CD4-positive, alpha-beta T cell (primary cell): ENCODE measurements at regions of chr1 and their contacts with region 1.

Region 1: GRCh38 chr1:221741711-221742554 is at the start of gene DUSP10:
- DNase-seq: peak; percentile 97 to 100 (median 98)
- ATAC-seq: peak; percentile 85
- H3K4me3 ChIP-seq: peak within 1 kb of the TSS; percentile 75
- H3K4me3 Mint-ChIP-seq: peak within 1 kb of the TSS; percentile 75
- H3K27ac ChIP-seq: peak within 1 kb of the TSS; percentile 98 to 99
- H3K27ac Mint-ChIP-seq: no peak within 1 kb of the TSS
- H3K4me1 ChIP-seq: peaks cover 41% of the 10 kb centered on the region
- H3K4me1 Mint-ChIP-seq: peaks cover 26% of the 10 kb centered on the region
- H3K27me3 ChIP-seq: no peaks in the 10 kb centered on the region
- H3K27me3 Mint-ChIP-seq: no peaks in the 10 kb centered on the region
- CTCF ChIP-seq: no peak
- total RNA-seq, gene DUSP10: 66.9 to 70.9 TPM

Region 2: GRCh38 chr1:221478050-221478949 is 263.6 kb before region 1 on chr1:
- CTCF ChIA-PET with region 1: interaction called, 12 read pairs
- POLR2A ChIA-PET with region 1: interaction called, 13 read pairs
- intact Hi-C with region 1: loop called in 1 of 2 experiments (anchors 5 kb)
- DNase-seq: peak; percentile 16 to 71 (median 50)
- ATAC-seq: peak; percentile 79
- H3K4me3 ChIP-seq: no peak overlapping the region
- H3K4me3 Mint-ChIP-seq: no peak overlapping the region
- H3K27ac ChIP-seq: no peak overlapping the region
- H3K27ac Mint-ChIP-seq: no peak overlapping the region
- H3K4me1 ChIP-seq: peaks cover 4% of the 10 kb centered on the region
- H3K4me1 Mint-ChIP-seq: no peaks in the 10 kb centered on the region
- H3K27me3 ChIP-seq: no peaks in the 10 kb centered on the region
- H3K27me3 Mint-ChIP-seq: peaks cover 5% of the 10 kb centered on the region
- CTCF ChIP-seq: peak; percentile 76

Region 3: DNA sequence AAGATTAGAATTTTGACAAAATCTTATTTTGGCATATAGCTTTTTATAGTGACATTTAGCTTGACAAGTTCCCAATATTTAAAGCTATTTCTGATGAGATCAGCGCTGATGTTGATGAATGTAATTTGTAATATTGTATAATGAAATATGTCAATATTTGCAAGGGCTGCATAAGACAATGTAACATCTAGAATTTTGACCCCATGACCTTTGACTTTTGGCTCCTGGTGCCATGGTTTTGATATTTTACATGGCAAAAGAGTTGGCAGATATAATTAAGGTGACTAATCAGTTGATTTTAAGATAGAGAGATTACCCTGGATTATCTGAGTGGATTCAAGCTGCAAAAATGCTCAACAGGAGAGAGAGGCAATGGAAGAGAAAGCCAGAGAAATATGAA is 63.9 kb before region 1 on chr1:
- CTCF ChIA-PET with region 1: no interaction called
- POLR2A ChIA-PET with region 1: interaction called, 10 read pairs
- intact Hi-C with region 1: no loop called
- DNase-seq: no peak
- ATAC-seq: no peak
- H3K4me3 ChIP-seq: no peak overlapping the region
- H3K4me3 Mint-ChIP-seq: no peak overlapping the region
- H3K27ac ChIP-seq: no peak overlapping the region
- H3K27ac Mint-ChIP-seq: no peak overlapping the region
- H3K4me1 ChIP-seq: no peaks in the 10 kb centered on the region
- H3K4me1 Mint-ChIP-seq: peaks cover 5% of the 10 kb centered on the region
- H3K27me3 ChIP-seq: no peaks in the 10 kb centered on the region
- H3K27me3 Mint-ChIP-seq: no peaks in the 10 kb centered on the region
- CTCF ChIP-seq: no peak

Region 4: GRCh38 chr1:221715321-221716169 is 26.4 kb before region 1 on chr1:
- CTCF ChIA-PET with region 1: interaction called, 22 read pairs
- POLR2A ChIA-PET with region 1: interaction called, 172 read pairs
- intact Hi-C with region 1: loop called (anchors 1 to 2 kb)
- DNase-seq: peak in 1 of 14 experiments; percentile 29
- ATAC-seq: no peak
- H3K4me3 ChIP-seq: no peak overlapping the region
- H3K4me3 Mint-ChIP-seq: no peak overlapping the region
- H3K27ac ChIP-seq: no peak overlapping the region
- H3K27ac Mint-ChIP-seq: peak overlapping the region; percentile 45
- H3K4me1 ChIP-seq: peaks cover 24% of the 10 kb centered on the region
- H3K4me1 Mint-ChIP-seq: peaks cover 55% of the 10 kb centered on the region
- H3K27me3 ChIP-seq: no peaks in the 10 kb centered on the region
- H3K27me3 Mint-ChIP-seq: no peaks in the 10 kb centered on the region
- CTCF ChIP-seq: no peak

Region 5: DNA sequence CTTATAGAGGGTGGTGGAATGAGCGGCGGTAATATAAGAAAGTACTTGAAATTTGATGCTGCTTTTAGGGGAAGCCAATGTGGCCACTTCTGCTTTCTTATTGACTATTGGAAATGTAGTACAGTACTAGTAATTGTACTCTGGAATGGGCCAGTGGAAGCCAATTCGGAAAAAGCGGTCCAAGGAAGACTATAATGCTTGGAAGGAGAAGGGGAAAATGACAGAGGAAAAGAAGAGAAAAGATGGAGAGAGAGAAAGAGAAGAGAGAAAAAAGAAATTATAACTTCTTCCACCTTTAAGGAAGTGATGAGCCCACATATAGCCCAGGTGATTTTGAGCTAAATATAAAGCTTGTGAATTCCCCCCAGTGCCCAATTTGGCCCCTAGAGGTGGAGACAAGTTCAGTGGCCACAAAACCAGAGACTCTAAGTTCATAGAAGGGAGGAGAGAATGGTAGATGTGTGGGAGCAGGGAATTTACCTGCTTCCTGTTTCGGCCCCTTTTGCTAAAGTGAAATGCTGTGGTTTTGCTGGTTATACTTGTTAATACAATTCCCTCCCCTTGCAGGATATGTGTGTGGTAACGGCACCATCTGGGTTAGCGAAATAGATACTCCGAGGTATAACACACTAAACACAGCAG is 35.6 kb after region 1 on chr1:
- CTCF ChIA-PET with region 1: no interaction called
- POLR2A ChIA-PET with region 1: interaction called, 72 read pairs
- intact Hi-C with region 1: loop called in 1 of 2 experiments (anchors 1 kb)
- DNase-seq: peak in 6 of 14 experiments; percentile 16 to 89 (median 52)
- ATAC-seq: peak; percentile 76
- H3K4me3 ChIP-seq: no peak overlapping the region
- H3K4me3 Mint-ChIP-seq: peak overlapping the region; percentile 47
- H3K27ac ChIP-seq: peak overlapping the region; percentile 43 to 59
- H3K27ac Mint-ChIP-seq: peak overlapping the region; percentile 88
- H3K4me1 ChIP-seq: peaks cover 54% of the 10 kb centered on the region
- H3K4me1 Mint-ChIP-seq: peaks cover 57% of the 10 kb centered on the region
- H3K27me3 ChIP-seq: no peaks in the 10 kb centered on the region
- H3K27me3 Mint-ChIP-seq: no peaks in the 10 kb centered on the region
- CTCF ChIP-seq: no peak

Region 6: DNA sequence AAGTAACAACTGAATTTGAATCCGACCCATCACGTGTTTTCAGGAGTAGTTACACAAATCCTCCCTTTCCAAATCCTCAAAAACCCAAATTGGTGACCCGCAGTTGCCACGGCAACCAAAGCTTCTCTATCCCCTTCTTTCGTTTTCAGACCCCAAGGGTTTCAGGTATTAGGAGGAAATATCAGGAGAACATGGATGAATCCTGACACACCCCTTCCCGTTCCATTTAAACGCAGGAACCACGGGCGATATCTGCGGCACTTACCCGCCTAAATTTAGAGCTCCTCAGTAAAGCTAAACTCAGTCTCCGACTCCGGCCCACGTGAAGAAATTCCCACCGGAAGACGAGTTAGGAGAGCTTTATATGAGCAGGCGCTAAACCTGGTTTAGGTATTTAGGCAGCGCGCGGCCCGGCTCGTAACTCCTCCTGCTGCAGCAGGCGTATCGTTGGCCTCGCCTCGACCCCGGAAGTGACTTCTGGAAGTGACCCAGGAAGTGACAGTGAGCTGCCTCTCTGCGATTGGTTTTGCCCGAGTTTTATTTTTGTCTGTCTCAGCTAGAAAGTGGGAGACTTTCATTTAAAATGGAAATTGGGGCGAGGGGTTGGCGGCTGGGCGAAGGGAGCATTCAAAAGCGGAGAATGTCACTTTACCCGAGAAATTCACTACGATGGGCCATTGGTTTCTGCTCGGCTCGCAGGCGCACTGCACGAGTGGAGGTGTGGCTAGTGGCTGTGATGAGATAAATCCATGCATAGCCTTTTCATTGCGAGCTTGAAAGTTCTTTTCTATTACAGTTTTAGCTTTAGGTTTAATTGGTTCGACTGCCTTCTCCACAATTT is 847.7 kb after region 1 on chr1 and contains the start of gene TAF1A:
- CTCF ChIA-PET with region 1: no interaction called
- POLR2A ChIA-PET with region 1: interaction called, 15 read pairs
- intact Hi-C with region 1: loop called in 1 of 2 experiments (anchors 5 kb)
- DNase-seq: peak; percentile 74 to 93 (median 82)
- ATAC-seq: peak; percentile 99
- H3K4me3 ChIP-seq: peak within 1 kb of the TSS; percentile 74
- H3K4me3 Mint-ChIP-seq: peak within 1 kb of the TSS; percentile 97
- H3K27ac ChIP-seq: peak within 1 kb of the TSS; percentile 67 to 76
- H3K27ac Mint-ChIP-seq: peak within 1 kb of the TSS; percentile 99
- H3K4me1 ChIP-seq: peaks cover 14% of the 10 kb centered on the region
- H3K4me1 Mint-ChIP-seq: peaks cover 55% of the 10 kb centered on the region
- H3K27me3 ChIP-seq: no peaks in the 10 kb centered on the region
- H3K27me3 Mint-ChIP-seq: no peaks in the 10 kb centered on the region
- CTCF ChIP-seq: no peak
- total RNA-seq, gene TAF1A: 3.3 to 4.1 TPM

Region 7: DNA sequence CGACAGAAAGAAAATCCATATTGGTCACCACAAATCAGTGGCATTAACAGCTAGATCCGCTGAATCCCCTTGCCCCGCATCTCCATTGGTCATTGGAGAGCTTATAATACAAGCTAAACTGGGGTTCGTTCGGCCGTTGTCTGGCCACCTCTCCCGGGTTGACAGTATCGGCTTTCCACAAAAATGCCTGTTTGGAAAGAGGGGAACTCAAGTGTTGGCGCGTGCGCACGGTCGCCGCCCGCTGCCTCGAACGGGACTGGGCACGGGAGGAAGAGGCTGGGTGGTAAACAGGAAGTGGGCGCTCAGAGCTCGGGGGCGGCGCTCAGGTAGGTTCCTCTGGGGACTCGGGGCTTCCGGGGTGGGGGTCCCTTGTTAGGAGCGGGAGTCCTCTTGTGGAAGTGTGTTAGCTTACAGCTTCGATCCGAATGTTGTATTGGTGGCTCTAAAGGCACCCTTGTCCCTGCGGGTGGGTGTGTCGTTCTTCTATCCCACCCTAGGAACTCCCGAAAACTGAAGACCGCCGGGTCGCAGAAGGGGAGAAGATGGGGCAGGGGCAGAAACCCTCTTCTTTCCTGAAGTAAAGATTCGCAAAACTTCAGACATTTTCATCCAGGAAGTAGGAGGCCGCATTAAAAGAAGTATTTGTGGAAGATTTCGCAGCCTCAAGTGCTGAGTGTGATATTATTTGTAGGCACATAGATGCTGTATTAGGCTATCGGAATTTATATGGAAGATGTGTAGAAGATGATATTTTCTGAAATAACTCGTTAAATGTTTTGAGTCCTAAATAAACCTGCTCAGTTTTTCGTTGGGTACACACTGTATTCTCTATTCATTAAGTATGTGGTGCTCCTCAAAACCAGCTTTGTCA is 971.4 kb after region 1 on chr1:
- CTCF ChIA-PET with region 1: interaction called, 3 read pairs
- POLR2A ChIA-PET with region 1: interaction called, 27 read pairs
- intact Hi-C with region 1: no loop called
- DNase-seq: peak; percentile 81 to 97 (median 92)
- ATAC-seq: peak; percentile 69
- H3K4me3 ChIP-seq: peak overlapping the region; percentile 90
- H3K4me3 Mint-ChIP-seq: peak overlapping the region; percentile 99
- H3K27ac ChIP-seq: peak overlapping the region; percentile 97 to 98
- H3K27ac Mint-ChIP-seq: peak overlapping the region; percentile 100
- H3K4me1 ChIP-seq: peaks cover 23% of the 10 kb centered on the region
- H3K4me1 Mint-ChIP-seq: peaks cover 62% of the 10 kb centered on the region
- H3K27me3 ChIP-seq: no peaks in the 10 kb centered on the region
- H3K27me3 Mint-ChIP-seq: no peaks in the 10 kb centered on the region
- CTCF ChIP-seq: peak; percentile 34